B cell (primary cell): ENCODE measurements at regions of chr12 and their contacts with region 1.

Region 1: GRCh38 chr12:45990468-45991283 is at the start of gene SCAF11:
- DNase-seq: peak; percentile 100
- ATAC-seq: peak; percentile 86
- H3K4me3 ChIP-seq: peak within 1 kb of the TSS; percentile 83 to 100 (median 95)
- H3K4me3 Mint-ChIP-seq: peak within 1 kb of the TSS; percentile 97
- H3K27ac ChIP-seq: peak within 1 kb of the TSS; percentile 93 to 98
- H3K27ac Mint-ChIP-seq: peak within 1 kb of the TSS; percentile 99
- H3K4me1 ChIP-seq: peaks cover 37 to 38% of the 10 kb centered on the region in 2 donors
- H3K4me1 Mint-ChIP-seq: peaks cover 44% of the 10 kb centered on the region
- H3K27me3 ChIP-seq: no peaks in the 10 kb centered on the region
- H3K27me3 Mint-ChIP-seq: no peaks in the 10 kb centered on the region
- CTCF ChIP-seq: peak; percentile 83
- total RNA-seq, gene SCAF11: 247 and 272 TPM in 2 replicates

Region 2: GRCh38 chr12:45215419-45216229 is 775.1 kb before region 1 on chr12 and contains the start of gene ANO6:
- CTCF ChIA-PET with region 1: no interaction called
- POLR2A ChIA-PET with region 1: no interaction called
- intact Hi-C with region 1: loop called (anchors 10 kb)
- DNase-seq: peak; percentile 85
- ATAC-seq: peak; percentile 73
- H3K4me3 ChIP-seq: peak within 1 kb of the TSS; percentile 65 to 96 (median 91)
- H3K4me3 Mint-ChIP-seq: peak within 1 kb of the TSS; percentile 96
- H3K27ac ChIP-seq: peak within 1 kb of the TSS; percentile 37 to 68
- H3K27ac Mint-ChIP-seq: peak within 1 kb of the TSS; percentile 89
- H3K4me1 ChIP-seq: peaks cover 14% of the 10 kb centered on the region in 2 donors
- H3K4me1 Mint-ChIP-seq: peaks cover 51% of the 10 kb centered on the region
- H3K27me3 ChIP-seq: no peaks in the 10 kb centered on the region
- H3K27me3 Mint-ChIP-seq: no peaks in the 10 kb centered on the region
- CTCF ChIP-seq: no peak
- total RNA-seq, gene ANO6: 18.7 and 19.5 TPM in 2 replicates

Region 3: DNA sequence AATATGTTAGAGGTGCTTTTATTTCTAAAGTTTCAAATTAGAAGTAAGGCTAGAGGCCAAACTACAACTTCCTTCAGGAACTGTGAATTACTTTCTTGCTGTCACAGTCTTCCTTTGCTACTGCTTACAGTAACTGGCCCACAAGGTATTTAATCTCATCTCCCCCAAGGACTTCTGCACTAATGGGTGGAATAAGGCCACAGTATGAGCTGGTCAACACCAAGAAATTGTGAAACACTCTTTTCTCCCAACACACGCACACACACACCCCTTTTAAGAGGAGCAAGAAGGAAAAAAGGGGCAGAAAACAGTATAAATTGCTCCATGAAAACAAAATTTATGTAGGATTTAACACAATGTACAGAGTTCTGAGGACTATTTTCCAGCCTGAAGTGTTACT is 45.9 kb before region 1 on chr12:
- CTCF ChIA-PET with region 1: no interaction called
- POLR2A ChIA-PET with region 1: no interaction called
- intact Hi-C with region 1: loop called (anchors 5 kb)
- DNase-seq: no peak
- ATAC-seq: no peak
- H3K4me3 ChIP-seq: no peak overlapping the region
- H3K4me3 Mint-ChIP-seq: no peak overlapping the region
- H3K27ac ChIP-seq: no peak overlapping the region
- H3K27ac Mint-ChIP-seq: no peak overlapping the region
- H3K4me1 ChIP-seq: no peaks in the 10 kb centered on the region
- H3K4me1 Mint-ChIP-seq: peaks cover 1% of the 10 kb centered on the region
- H3K27me3 ChIP-seq: no peaks in the 10 kb centered on the region
- H3K27me3 Mint-ChIP-seq: no peaks in the 10 kb centered on the region
- CTCF ChIP-seq: no peak

Region 4: DNA sequence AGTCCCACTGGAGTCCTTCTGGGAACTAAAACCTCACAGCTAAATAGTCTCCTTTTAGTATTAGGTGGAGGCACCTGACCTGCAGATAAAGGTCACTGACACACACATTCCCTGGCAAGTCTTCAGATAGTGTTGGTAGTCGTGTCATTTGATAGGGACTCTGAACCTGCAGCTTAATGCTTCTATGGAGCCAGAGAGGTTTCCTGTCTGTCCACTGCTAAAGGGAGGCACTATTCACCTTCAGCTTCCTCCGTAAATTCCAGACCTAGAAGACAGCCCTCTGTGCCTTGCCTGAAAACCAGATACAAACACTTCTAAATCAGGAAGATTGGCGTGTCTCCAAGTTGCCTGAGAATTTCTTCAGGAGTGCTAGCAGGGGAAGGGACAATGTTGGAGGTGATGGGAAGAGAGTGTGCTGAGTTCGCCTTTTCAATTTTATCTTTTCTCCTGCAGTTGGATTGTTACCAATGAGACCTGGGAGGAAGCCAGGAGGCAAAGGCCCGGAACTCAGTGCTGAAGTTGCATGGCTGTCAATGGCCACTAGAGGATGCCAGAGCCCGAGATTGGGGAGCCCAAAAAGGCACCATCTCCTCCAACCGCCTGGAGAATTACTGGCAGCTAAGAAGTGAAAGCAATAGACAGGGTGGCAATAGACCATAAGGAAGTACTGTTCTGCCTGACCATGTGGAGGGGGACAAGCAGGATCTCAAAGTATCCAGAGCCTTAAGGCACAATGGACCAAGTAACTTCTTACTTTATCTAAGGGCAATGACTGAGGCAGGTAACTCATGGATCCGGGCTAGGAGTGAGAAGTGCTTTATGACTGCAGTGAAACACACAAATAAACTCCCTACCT is 81.3 kb after region 1 on chr12:
- CTCF ChIA-PET with region 1: no interaction called
- POLR2A ChIA-PET with region 1: no interaction called
- intact Hi-C with region 1: loop called (anchors 2 kb)
- DNase-seq: peak; percentile 77
- ATAC-seq: peak; percentile 93
- H3K4me3 ChIP-seq: no peak overlapping the region
- H3K4me3 Mint-ChIP-seq: no peak overlapping the region
- H3K27ac ChIP-seq: no peak overlapping the region
- H3K27ac Mint-ChIP-seq: no peak overlapping the region
- H3K4me1 ChIP-seq: peaks cover 3 to 7% of the 10 kb centered on the region in 2 donors
- H3K4me1 Mint-ChIP-seq: peaks cover 8% of the 10 kb centered on the region
- H3K27me3 ChIP-seq: no peaks in the 10 kb centered on the region
- H3K27me3 Mint-ChIP-seq: no peaks in the 10 kb centered on the region
- CTCF ChIP-seq: peak; percentile 97

Region 5: GRCh38 chr12:46209914-46210872 is 219.5 kb after region 1 on chr12:
- CTCF ChIA-PET with region 1: no interaction called
- POLR2A ChIA-PET with region 1: no interaction called
- intact Hi-C with region 1: loop called (anchors 2 kb)
- DNase-seq: peak; percentile 77
- ATAC-seq: peak; percentile 72
- H3K4me3 ChIP-seq: peak overlapping the region in 1 of 5 experiments; percentile 9
- H3K4me3 Mint-ChIP-seq: peak overlapping the region; percentile 68
- H3K27ac ChIP-seq: peak overlapping the region; percentile 84 to 96
- H3K27ac Mint-ChIP-seq: peak overlapping the region; percentile 92
- H3K4me1 ChIP-seq: peaks cover 74 to 88% of the 10 kb centered on the region in 2 donors
- H3K4me1 Mint-ChIP-seq: peaks cover 89% of the 10 kb centered on the region
- H3K27me3 ChIP-seq: no peaks in the 10 kb centered on the region
- H3K27me3 Mint-ChIP-seq: no peaks in the 10 kb centered on the region
- CTCF ChIP-seq: no peak

Region 6: GRCh38 chr12:46276756-46277155 is 286.1 kb after region 1 on chr12:
- CTCF ChIA-PET with region 1: no interaction called
- POLR2A ChIA-PET with region 1: no interaction called
- intact Hi-C with region 1: no loop called
- DNase-seq: no peak
- ATAC-seq: no peak
- H3K4me3 ChIP-seq: no peak overlapping the region
- H3K4me3 Mint-ChIP-seq: no peak overlapping the region
- H3K27ac ChIP-seq: no peak overlapping the region
- H3K27ac Mint-ChIP-seq: no peak overlapping the region
- H3K4me1 ChIP-seq: no peaks in the 10 kb centered on the region
- H3K4me1 Mint-ChIP-seq: peaks cover 9% of the 10 kb centered on the region
- H3K27me3 ChIP-seq: no peaks in the 10 kb centered on the region
- H3K27me3 Mint-ChIP-seq: no peaks in the 10 kb centered on the region
- CTCF ChIP-seq: no peak

Region 7: GRCh38 chr12:46372544-46373110 is 382.0 kb after region 1 on chr12 and contains the start of gene SLC38A2:
- CTCF ChIA-PET with region 1: no interaction called
- POLR2A ChIA-PET with region 1: interaction called, 3 read pairs
- intact Hi-C with region 1: loop called (anchors 2 kb)
- DNase-seq: peak; percentile 97
- ATAC-seq: peak; percentile 84
- H3K4me3 ChIP-seq: peak within 1 kb of the TSS; percentile 80 to 99 (median 97)
- H3K4me3 Mint-ChIP-seq: peak within 1 kb of the TSS; percentile 98
- H3K27ac ChIP-seq: peak within 1 kb of the TSS; percentile 90 to 91
- H3K27ac Mint-ChIP-seq: peak within 1 kb of the TSS; percentile 99
- H3K4me1 ChIP-seq: peaks cover 39 to 40% of the 10 kb centered on the region in 2 donors
- H3K4me1 Mint-ChIP-seq: peaks cover 45% of the 10 kb centered on the region
- H3K27me3 ChIP-seq: no peaks in the 10 kb centered on the region
- H3K27me3 Mint-ChIP-seq: no peaks in the 10 kb centered on the region
- CTCF ChIP-seq: no peak
- total RNA-seq, gene SLC38A2: 202 TPM in 2 replicates

Region 8: GRCh38 chr12:47812797-47813510 is 1822.3 kb after region 1 on chr12:
- CTCF ChIA-PET with region 1: no interaction called
- POLR2A ChIA-PET with region 1: no interaction called
- intact Hi-C with region 1: loop called (anchors 5 kb)
- DNase-seq: peak; percentile 94
- ATAC-seq: peak; percentile 72
- H3K4me3 ChIP-seq: peak overlapping the region; percentile 53 to 68 (median 61)
- H3K4me3 Mint-ChIP-seq: peak overlapping the region; percentile 85
- H3K27ac ChIP-seq: peak overlapping the region; percentile 96 to 98
- H3K27ac Mint-ChIP-seq: peak overlapping the region; percentile 96
- H3K4me1 ChIP-seq: peaks cover 91 to 97% of the 10 kb centered on the region in 2 donors
- H3K4me1 Mint-ChIP-seq: peaks cover 94% of the 10 kb centered on the region
- H3K27me3 ChIP-seq: no peaks in the 10 kb centered on the region
- H3K27me3 Mint-ChIP-seq: no peaks in the 10 kb centered on the region
- CTCF ChIP-seq: no peak